ENCODE measurements at regions of chr11 and their contacts with region 1.

Region 1: GRCh38 chr11:18304745-18305144 is 17.2 kb downstream of the HPS5 start:
- DNase-seq: no peak
- H3K4me3 ChIP-seq: no peak overlapping the region
- H3K27ac ChIP-seq: no peak overlapping the region
- H3K4me1 ChIP-seq: no peaks in the 10 kb centered on the region
- H3K27me3 ChIP-seq: no peaks in the 10 kb centered on the region
- CTCF ChIP-seq: no peak

Region 2: DNA sequence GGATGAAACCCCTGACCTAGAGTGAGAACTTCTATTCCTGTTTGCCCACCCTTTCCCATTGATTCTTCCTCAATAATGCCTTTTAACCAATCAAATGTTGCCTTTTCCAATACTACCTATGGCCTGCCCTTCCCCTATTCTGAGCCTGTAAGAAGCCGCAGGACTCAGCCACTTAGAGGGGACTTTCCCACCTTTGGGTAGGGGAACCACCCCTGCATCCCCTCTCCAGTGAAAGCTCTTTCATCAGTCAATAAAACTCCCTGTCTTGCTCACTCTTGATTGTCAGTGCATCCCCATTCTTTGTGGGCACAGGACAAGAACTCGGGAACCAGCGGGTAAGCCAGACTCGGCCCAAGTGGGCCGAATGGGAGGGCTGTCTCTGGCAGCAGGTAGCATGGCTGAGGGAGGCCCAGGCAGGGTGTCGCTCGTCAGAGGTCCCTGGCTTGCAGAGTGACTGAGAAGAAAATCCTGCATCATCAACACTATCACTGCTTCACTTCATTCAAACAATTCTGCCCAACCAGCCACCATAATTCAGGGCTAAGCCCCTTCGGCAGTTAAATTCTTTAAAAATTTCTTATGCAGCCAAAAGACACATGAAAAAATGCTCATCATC is 181.3 kb after region 1 on chr11:
- intact Hi-C with region 1: loop called (anchors 10 kb)
- DNase-seq: no peak
- H3K4me3 ChIP-seq: no peak overlapping the region
- H3K27ac ChIP-seq: no peak overlapping the region
- H3K4me1 ChIP-seq: no peaks in the 10 kb centered on the region
- H3K27me3 ChIP-seq: no peaks in the 10 kb centered on the region
- CTCF ChIP-seq: no peak